ENCODE measurements at regions of chr11 and their contacts with region 1.

Region 1: DNA sequence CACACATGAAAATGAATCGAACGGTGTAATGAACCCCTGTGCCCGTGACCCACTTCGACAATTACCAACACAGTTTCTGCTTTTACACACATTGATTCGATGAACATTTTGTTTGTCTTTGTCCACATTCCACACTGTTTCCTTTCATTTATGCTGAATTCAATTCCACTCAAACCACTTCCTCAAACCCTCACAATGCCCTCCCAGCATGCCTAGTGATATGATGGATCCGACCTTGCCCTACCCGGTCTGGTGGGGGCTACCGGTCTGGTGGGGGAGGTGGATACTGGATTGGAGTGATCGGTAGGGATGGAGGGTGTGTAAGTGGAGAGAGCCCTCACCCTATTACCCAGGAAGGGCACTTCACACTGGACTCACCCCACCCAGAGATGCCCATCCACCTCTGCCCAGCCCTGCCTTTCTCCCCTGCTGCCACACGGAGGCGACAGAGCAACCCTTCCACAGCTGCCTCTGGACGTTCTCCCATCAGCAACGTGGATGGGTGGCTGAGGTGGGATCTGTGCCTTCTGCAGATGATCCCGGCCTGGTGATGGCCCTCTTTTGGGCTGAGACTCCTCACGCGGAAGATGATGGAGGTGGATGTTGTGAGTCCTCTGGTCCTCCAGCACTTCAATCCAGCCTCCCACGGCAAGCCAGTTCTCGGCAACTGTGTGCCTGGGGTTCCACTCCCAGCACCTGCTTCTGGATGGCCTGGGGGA is 33.0 kb upstream of the P2RY2 start:
- DNase-seq: peak; percentile 69
- H3K4me3 Mint-ChIP-seq: no peak overlapping the region
- H3K27ac Mint-ChIP-seq: no peak overlapping the region
- H3K4me1 Mint-ChIP-seq: peaks cover 7% of the 10 kb centered on the region
- H3K27me3 Mint-ChIP-seq: peaks cover 50% of the 10 kb centered on the region

Region 2: DNA sequence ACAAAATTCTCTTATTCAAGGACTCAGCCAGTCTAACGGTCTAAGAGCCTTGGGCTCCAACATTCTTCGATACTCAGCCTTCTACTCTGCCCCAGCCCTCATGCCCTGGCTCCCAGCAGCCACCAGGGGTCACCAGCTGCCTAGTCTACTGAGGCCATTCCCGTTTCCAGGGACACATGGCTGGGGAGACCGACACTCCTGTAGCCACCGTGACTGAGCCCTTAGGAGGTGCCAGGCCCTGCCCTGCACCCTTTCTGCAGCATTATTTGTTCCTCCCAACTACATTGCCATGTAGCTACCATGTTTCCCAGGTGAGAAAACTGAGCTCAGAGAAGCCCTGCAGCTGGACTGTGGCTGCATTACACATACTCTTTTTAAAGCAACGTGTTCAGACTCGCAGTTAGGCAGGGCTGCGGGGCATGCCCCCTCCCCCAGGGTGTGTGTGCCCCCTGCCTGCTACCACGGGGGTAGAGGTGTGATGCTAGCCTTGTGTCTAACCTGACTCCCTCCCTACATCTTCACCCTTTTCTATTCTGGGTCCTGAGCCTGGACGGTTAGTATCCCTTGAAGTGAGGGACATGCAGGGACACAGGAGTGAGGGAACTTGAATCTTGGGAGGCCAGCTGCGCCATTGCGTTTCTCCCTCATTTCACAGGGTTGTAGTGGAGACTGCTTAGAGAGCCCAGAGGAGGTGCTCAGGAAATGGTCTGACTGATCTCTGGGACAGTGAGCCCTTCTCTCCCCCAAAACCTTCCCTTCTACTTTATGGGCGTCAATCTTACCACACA is 353.4 kb before region 1 on chr11:
- CTCF ChIA-PET with region 1: interaction called, 180 read pairs
- DNase-seq: peak; percentile 66
- H3K4me3 Mint-ChIP-seq: no peak overlapping the region
- H3K27ac Mint-ChIP-seq: peak overlapping the region; percentile 76
- H3K4me1 Mint-ChIP-seq: peaks cover 31% of the 10 kb centered on the region
- H3K27me3 Mint-ChIP-seq: no peaks in the 10 kb centered on the region

Region 3: GRCh38 chr11:72924568-72925190 is 260.4 kb before region 1 on chr11:
- CTCF ChIA-PET with region 1: interaction called, 71 read pairs
- DNase-seq: no peak
- H3K4me3 Mint-ChIP-seq: no peak overlapping the region
- H3K27ac Mint-ChIP-seq: no peak overlapping the region
- H3K4me1 Mint-ChIP-seq: peaks cover 2% of the 10 kb centered on the region
- H3K27me3 Mint-ChIP-seq: no peaks in the 10 kb centered on the region

Region 4: GRCh38 chr11:73236854-73237253 is 51.7 kb after region 1 on chr11:
- CTCF ChIA-PET with region 1: interaction called, 16 read pairs
- DNase-seq: peak; percentile 55
- H3K4me3 Mint-ChIP-seq: no peak overlapping the region
- H3K27ac Mint-ChIP-seq: no peak overlapping the region
- H3K4me1 Mint-ChIP-seq: no peaks in the 10 kb centered on the region
- H3K27me3 Mint-ChIP-seq: peaks cover 25% of the 10 kb centered on the region

Region 5: GRCh38 chr11:73288873-73289707 is 104.0 kb after region 1 on chr11:
- CTCF ChIA-PET with region 1: interaction called, 62 read pairs
- DNase-seq: peak; percentile 66
- H3K4me3 Mint-ChIP-seq: no peak overlapping the region
- H3K27ac Mint-ChIP-seq: no peak overlapping the region
- H3K4me1 Mint-ChIP-seq: peaks cover 16% of the 10 kb centered on the region
- H3K27me3 Mint-ChIP-seq: peaks cover 56% of the 10 kb centered on the region

Measured in activated naive CD4-positive, alpha-beta T cell treated with anti-CD3 and anti-CD28 coated beads, Interleukin-2, amount 10 ng/mL, durations not matched to agents 7 days and 5 days (primary cell).